ENCODE measurements at regions of chr4 and their contacts with region 1.

Region 1: GRCh38 chr4:39626261-39626660 is 12.4 kb downstream of the SMIM14 start:
- DNase-seq: no peak
- H3K4me3 ChIP-seq: no peak overlapping the region
- H3K27ac ChIP-seq: no peak overlapping the region
- H3K4me1 ChIP-seq: no peaks in the 10 kb centered on the region
- H3K27me3 ChIP-seq: no peaks in the 10 kb centered on the region
- CTCF ChIP-seq: no peak

Region 2: GRCh38 chr4:39521253-39521919 is 104.9 kb before region 1 on chr4:
- CTCF ChIA-PET with region 1: no interaction called
- dilution Hi-C with region 1: loop called (anchors 5 kb)
- in situ Hi-C with region 1: no loop called
- intact Hi-C with region 1: no loop called
- DNase-seq: no peak
- H3K4me3 ChIP-seq: no peak overlapping the region
- H3K27ac ChIP-seq: no peak overlapping the region
- H3K4me1 ChIP-seq: no peaks in the 10 kb centered on the region
- H3K27me3 ChIP-seq: no peaks in the 10 kb centered on the region
- CTCF ChIP-seq: no peak